Mucosa of descending colon (tissue), 3 donors: ENCODE measurements at regions of chr12 and their contacts with region 1.

Region 1: GRCh38 chr12:64610149-64610678 is at the start of gene RASSF3:
- DNase-seq: peak; percentile 80 to 91 (median 90)
- ATAC-seq: peak; percentile 78
- H3K4me3 ChIP-seq: peak within 1 kb of the TSS; percentile 90
- H3K4me1 ChIP-seq: peaks cover 29% of the 10 kb centered on the region
- CTCF ChIP-seq: no peak
- total RNA-seq, gene RASSF3: 88.0 to 331 (median 90.2) TPM

Region 2: DNA sequence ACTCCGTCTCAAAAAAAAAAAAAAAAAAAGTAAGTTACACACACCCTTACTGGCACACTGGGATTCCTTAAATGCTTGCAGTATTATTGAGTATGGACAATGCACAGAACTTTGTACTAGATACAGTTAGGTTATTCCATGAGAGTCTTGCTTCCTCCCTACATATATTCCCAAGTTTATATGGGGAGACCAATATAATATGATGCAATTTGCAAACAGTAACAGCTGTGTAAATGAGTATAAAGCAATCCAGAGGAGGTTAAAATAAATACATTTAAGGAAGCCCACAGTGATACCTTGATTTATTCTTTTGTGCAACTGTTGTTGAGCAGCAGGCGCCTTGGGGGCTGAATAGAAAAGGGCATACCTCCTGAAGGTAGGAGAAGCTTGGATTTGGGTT is 26.6 kb after region 1 on chr12:
- intact Hi-C with region 1: loop called in 1 of 2 experiments (anchors 2 kb)
- DNase-seq: no peak
- ATAC-seq: peak; percentile 88
- H3K4me3 ChIP-seq: no peak overlapping the region
- H3K4me1 ChIP-seq: peaks cover 60% of the 10 kb centered on the region
- CTCF ChIP-seq: no peak

Region 3: DNA sequence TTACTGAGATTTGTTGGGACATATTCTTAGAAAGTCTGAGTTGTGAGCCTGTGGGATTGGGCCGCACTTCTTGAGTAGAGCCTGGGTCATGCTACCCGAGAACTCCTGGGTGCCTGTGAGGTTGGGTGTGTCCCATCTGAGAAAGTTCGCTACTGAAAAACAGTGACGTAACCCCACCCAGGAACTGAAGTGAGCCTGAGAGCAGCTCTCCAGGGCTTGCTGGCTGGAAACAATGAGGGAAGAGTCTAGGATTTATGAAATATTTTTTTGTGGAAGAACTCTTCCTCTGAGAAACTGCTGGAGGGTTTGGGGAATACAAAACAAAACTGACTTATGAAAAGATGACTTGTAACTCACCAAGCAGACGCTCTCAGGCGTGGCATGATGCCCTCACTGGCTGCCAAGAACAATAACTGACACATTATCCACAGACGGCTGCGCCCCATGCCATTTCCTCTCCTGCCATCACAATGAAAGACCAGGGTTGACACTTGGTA is 69.3 kb after region 1 on chr12:
- intact Hi-C with region 1: loop called in 1 of 2 experiments (anchors 5 kb)
- DNase-seq: peak; percentile 74 to 85 (median 78)
- ATAC-seq: peak; percentile 79
- H3K4me3 ChIP-seq: no peak overlapping the region
- H3K4me1 ChIP-seq: peaks cover 51% of the 10 kb centered on the region
- CTCF ChIP-seq: no peak

Region 4: DNA sequence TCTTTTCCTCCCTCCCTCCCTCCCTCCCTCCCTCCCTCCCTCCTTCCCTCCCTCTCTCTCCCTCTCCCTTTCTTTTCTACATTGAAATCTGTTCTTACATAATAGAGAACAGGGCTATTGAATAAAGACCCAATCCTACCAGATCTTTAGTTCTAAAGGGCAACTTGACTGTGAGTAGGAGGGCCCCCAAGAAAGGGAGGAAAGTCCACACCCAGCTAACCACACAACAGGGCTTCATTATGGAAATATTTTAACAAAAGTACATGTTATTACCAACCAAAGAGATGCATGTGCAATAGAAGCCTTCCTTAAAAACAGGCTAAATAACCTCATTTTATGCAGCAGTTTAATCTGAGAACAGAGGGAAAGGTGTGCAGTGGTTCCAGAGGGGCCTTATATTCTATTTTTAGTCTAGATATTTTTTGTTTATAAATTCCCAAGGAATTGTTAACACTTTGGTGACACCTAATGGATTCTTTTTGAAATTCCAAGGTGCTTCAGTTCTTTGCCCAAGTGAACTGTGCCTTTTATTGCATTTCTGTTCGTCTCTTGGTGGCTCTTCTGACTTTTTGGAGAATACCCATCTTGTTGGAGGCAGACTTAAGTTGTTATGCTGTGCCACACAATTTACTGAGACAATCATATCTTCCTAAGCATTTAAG is 86.0 kb after region 1 on chr12:
- intact Hi-C with region 1: loop called in 1 of 2 experiments (anchors 10 kb)
- DNase-seq: no peak
- ATAC-seq: peak; percentile 8
- H3K4me3 ChIP-seq: no peak overlapping the region
- H3K4me1 ChIP-seq: peaks cover 4% of the 10 kb centered on the region
- CTCF ChIP-seq: no peak

Region 5: DNA sequence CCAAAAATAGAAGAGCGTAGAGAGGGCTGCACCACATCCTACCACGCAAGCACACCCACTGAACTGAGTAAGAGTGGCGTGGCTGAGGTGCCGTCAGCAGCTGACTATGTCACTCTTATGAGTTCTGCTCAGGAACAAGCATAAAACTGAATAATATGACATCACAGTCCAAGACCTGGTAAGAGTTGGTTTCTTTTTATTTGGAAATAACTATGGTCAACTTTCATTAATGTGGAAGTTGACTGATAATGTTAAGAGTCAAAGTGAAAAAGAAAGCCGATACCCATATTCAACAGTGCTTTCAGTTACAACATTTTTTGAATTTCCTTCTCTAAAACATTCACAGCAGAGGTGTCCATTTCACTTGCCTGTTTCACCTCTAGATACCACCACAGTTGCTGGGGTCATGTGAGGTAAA is 104.3 kb after region 1 on chr12:
- intact Hi-C with region 1: no loop called
- DNase-seq: no peak
- ATAC-seq: peak; percentile 28
- H3K4me3 ChIP-seq: no peak overlapping the region
- H3K4me1 ChIP-seq: no peaks in the 10 kb centered on the region
- CTCF ChIP-seq: no peak